ENCODE measurements at regions of chr17 and their contacts with region 1.

Region 1: GRCh38 chr17:39636927-39637736 is at the start of gene STARD3:
- H3K4me3 ChIP-seq: peak within 1 kb of the TSS; percentile 88
- H3K27ac ChIP-seq: peak within 1 kb of the TSS; percentile 76
- H3K4me1 ChIP-seq: peaks cover 25% of the 10 kb centered on the region
- CTCF ChIP-seq: peak; percentile 90

Region 2: DNA sequence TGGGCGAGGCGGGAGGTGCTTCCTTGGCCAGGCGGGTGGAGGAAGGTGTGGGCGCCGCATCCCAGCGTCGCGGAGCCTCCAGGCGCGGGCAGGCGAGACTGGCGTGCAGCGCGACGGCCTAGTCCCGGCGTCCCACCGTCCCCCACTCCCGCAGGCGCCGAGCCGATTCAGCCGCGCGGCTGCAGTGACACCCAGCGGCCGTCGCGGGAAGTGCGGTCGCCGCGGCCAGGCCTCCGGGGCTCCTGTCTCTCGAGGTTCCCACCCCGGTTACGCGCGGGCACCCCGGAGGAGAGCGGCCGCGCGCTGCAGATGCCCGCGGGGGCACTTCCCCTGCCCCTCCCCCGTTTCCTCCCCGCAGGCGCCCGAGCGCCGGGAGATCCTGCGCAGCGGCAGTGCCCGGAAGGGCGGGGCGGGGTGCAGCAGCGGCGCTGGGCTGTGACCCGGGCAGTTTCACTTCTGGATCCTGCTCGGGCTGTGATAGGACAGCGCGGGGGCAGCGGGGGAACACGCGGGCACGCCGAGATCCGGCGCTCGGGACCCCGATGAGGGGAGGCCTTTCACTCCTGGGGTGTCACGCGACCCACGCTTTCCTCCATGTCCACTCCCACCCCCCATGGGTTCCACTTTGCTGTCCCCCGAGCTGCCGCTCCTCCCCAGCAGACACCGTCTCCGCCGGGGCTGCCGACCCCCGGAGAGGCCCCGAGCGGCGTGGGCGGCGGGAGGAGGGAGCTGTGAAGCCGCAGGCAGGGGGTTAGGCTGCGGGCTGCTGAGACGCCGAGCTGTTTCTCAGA is 117.2 kb after region 1 on chr17:
- CTCF ChIA-PET with region 1: interaction called, 20 read pairs
- POLR2A ChIA-PET with region 1: no interaction called
- H3K4me3 ChIP-seq: peak overlapping the region; percentile 50
- H3K27ac ChIP-seq: peak overlapping the region; percentile 87
- H3K4me1 ChIP-seq: peaks cover 4% of the 10 kb centered on the region; the same call in 1 of the 2 replicates
- CTCF ChIP-seq: peak; percentile 95

Measured in HEK293 (cell line).